ENCODE measurements at regions of chr11 and their contacts with region 1.

Region 1: GRCh38 chr11:64304316-64305072 is 830 bp upstream of the ESRRA start:
- DNase-seq: peak; percentile 98
- H3K4me3 Mint-ChIP-seq: peak overlapping the region; percentile 88
- H3K27ac Mint-ChIP-seq: peak overlapping the region; percentile 91
- H3K4me1 Mint-ChIP-seq: peaks cover 39% of the 10 kb centered on the region
- H3K27me3 Mint-ChIP-seq: peaks cover 19% of the 10 kb centered on the region

Region 2: GRCh38 chr11:64000026-64000739 is 304.3 kb before region 1 on chr11:
- CTCF ChIA-PET with region 1: no interaction called
- intact Hi-C with region 1: loop called (anchors 2 kb)
- DNase-seq: peak; percentile 72
- H3K4me3 Mint-ChIP-seq: no peak overlapping the region
- H3K27ac Mint-ChIP-seq: no peak overlapping the region
- H3K4me1 Mint-ChIP-seq: peaks cover 5% of the 10 kb centered on the region
- H3K27me3 Mint-ChIP-seq: peaks cover 6% of the 10 kb centered on the region

Region 3: GRCh38 chr11:64204464-64204989 is 100.0 kb before region 1 on chr11:
- CTCF ChIA-PET with region 1: interaction called, 89 read pairs
- intact Hi-C with region 1: loop called (anchors 1 kb)
- DNase-seq: peak; percentile 93
- H3K4me3 Mint-ChIP-seq: peak overlapping the region; percentile 13
- H3K27ac Mint-ChIP-seq: peak overlapping the region; percentile 89
- H3K4me1 Mint-ChIP-seq: peaks cover 49% of the 10 kb centered on the region
- H3K27me3 Mint-ChIP-seq: no peaks in the 10 kb centered on the region

Region 4: GRCh38 chr11:64240394-64241174 is 63.9 kb before region 1 on chr11 and contains the start of gene FKBP2:
- CTCF ChIA-PET with region 1: interaction called, 7 read pairs
- intact Hi-C with region 1: loop called (anchors 1 kb)
- DNase-seq: peak; percentile 97
- H3K4me3 Mint-ChIP-seq: peak within 1 kb of the TSS; percentile 92
- H3K27ac Mint-ChIP-seq: peak within 1 kb of the TSS; percentile 98
- H3K4me1 Mint-ChIP-seq: peaks cover 35% of the 10 kb centered on the region
- H3K27me3 Mint-ChIP-seq: no peaks in the 10 kb centered on the region
- total RNA-seq, gene FKBP2: 17.2 to 20.0 TPM

Region 5: DNA sequence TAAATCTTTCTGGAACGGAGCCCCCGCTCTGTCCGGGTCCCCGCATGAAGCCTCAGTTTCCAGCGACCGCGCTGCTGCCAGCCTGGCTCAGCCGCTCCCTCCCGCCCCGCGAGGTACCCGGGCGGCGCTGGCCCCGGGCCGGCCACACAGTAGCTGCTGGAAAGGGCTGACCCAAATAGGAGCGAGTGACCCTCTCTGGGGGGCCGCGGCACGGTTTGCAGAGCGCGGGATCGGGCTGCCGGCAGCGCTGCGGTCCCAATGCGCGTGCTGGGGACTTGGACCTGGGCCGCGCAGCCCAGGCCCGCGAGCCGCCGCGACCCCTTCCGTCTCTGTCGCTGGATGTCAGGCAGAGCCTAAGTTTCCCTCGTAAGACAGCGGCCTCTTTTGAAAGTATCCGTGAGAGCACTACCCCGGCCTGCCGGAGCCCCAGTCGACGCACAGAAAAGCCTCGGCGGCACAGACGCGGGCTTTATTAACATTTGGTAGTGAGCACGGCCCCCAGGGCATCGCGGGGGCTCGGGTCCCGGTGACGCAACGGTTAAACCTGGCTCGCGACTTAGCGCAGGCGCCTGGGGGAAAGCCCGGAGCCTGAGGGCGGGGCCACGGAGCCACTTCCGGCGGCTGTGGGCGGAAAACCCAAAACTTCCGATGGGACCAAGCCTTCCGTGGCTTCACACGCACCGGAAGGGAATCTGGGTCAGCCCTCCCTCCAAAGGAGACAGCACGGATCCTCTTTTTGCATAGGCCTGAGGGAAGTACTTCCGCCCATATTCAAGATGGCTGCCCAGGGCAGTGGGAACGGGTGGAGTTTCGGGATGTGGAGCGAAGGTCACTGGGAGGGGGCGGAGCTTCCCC is 34.9 kb before region 1 on chr11:
- CTCF ChIA-PET with region 1: interaction called, 56 read pairs
- intact Hi-C with region 1: loop called (anchors 1 kb)
- DNase-seq: peak; percentile 98
- H3K4me3 Mint-ChIP-seq: peak overlapping the region; percentile 90
- H3K27ac Mint-ChIP-seq: peak overlapping the region; percentile 88
- H3K4me1 Mint-ChIP-seq: peaks cover 15% of the 10 kb centered on the region
- H3K27me3 Mint-ChIP-seq: no peaks in the 10 kb centered on the region

Region 6: GRCh38 chr11:64317957-64318693 is 13.6 kb after region 1 on chr11 and contains the start of gene PRDX5:
- CTCF ChIA-PET with region 1: interaction called, 18 read pairs
- intact Hi-C with region 1: loop called (anchors 1 kb)
- DNase-seq: peak; percentile 94
- H3K4me3 Mint-ChIP-seq: peak within 1 kb of the TSS; percentile 94
- H3K27ac Mint-ChIP-seq: peak within 1 kb of the TSS; percentile 99
- H3K4me1 Mint-ChIP-seq: peaks cover 33% of the 10 kb centered on the region
- H3K27me3 Mint-ChIP-seq: no peaks in the 10 kb centered on the region
- total RNA-seq, gene PRDX5: 122 to 132 TPM

Region 7: GRCh38 chr11:64358907-64359711 is 54.6 kb after region 1 on chr11 and contains the start of gene RPS6KA4:
- CTCF ChIA-PET with region 1: interaction called, 6 read pairs
- intact Hi-C with region 1: loop called (anchors 1 kb)
- DNase-seq: peak; percentile 60
- H3K4me3 Mint-ChIP-seq: peak within 1 kb of the TSS; percentile 91
- H3K27ac Mint-ChIP-seq: peak within 1 kb of the TSS; percentile 34
- H3K4me1 Mint-ChIP-seq: peaks cover 41% of the 10 kb centered on the region
- H3K27me3 Mint-ChIP-seq: no peaks in the 10 kb centered on the region
- total RNA-seq, gene RPS6KA4: 19.1 to 21.3 TPM